Activated naive CD4-positive, alpha-beta T cell treated with anti-CD3 and anti-CD28 coated beads, Interleukin-2, amount 10 ng/mL, durations not matched to agents 7 days and 5 days (primary cell): ENCODE measurements at regions of chr20 and their contacts with region 1.

Region 1: GRCh38 chr20:35303735-35304491 is 11.7 kb upstream of the FAM83C start:
- DNase-seq: peak; percentile 91
- H3K4me3 Mint-ChIP-seq: no peak overlapping the region
- H3K27ac Mint-ChIP-seq: no peak overlapping the region
- H3K4me1 Mint-ChIP-seq: peaks cover 23% of the 10 kb centered on the region
- H3K27me3 Mint-ChIP-seq: peaks cover under 1% of the 10 kb centered on the region

Region 2: GRCh38 chr20:35129647-35130069 is 174.3 kb before region 1 on chr20:
- CTCF ChIA-PET with region 1: no interaction called
- DNase-seq: no peak
- H3K4me3 Mint-ChIP-seq: no peak overlapping the region
- H3K27ac Mint-ChIP-seq: no peak overlapping the region
- H3K4me1 Mint-ChIP-seq: no peaks in the 10 kb centered on the region
- H3K27me3 Mint-ChIP-seq: no peaks in the 10 kb centered on the region

Region 3: GRCh38 chr20:35232575-35232974 is 71.3 kb before region 1 on chr20:
- CTCF ChIA-PET with region 1: no interaction called
- DNase-seq: no peak
- H3K4me3 Mint-ChIP-seq: no peak overlapping the region
- H3K27ac Mint-ChIP-seq: no peak overlapping the region
- H3K4me1 Mint-ChIP-seq: no peaks in the 10 kb centered on the region
- H3K27me3 Mint-ChIP-seq: peaks cover 16% of the 10 kb centered on the region

Region 4: GRCh38 chr20:35318502-35319157 is 14.7 kb after region 1 on chr20:
- CTCF ChIA-PET with region 1: interaction called, 16 read pairs
- DNase-seq: no peak
- H3K4me3 Mint-ChIP-seq: no peak overlapping the region
- H3K27ac Mint-ChIP-seq: peak overlapping the region; percentile 42
- H3K4me1 Mint-ChIP-seq: peaks cover 34% of the 10 kb centered on the region
- H3K27me3 Mint-ChIP-seq: no peaks in the 10 kb centered on the region

Region 5: GRCh38 chr20:35329435-35330139 is 25.7 kb after region 1 on chr20:
- CTCF ChIA-PET with region 1: interaction called, 104 read pairs
- DNase-seq: peak; percentile 62
- H3K4me3 Mint-ChIP-seq: no peak overlapping the region
- H3K27ac Mint-ChIP-seq: no peak overlapping the region
- H3K4me1 Mint-ChIP-seq: no peaks in the 10 kb centered on the region
- H3K27me3 Mint-ChIP-seq: no peaks in the 10 kb centered on the region

Region 6: GRCh38 chr20:35421322-35421721 is 117.4 kb after region 1 on chr20:
- CTCF ChIA-PET with region 1: no interaction called
- DNase-seq: no peak
- H3K4me3 Mint-ChIP-seq: no peak overlapping the region
- H3K27ac Mint-ChIP-seq: no peak overlapping the region
- H3K4me1 Mint-ChIP-seq: no peaks in the 10 kb centered on the region
- H3K27me3 Mint-ChIP-seq: peaks cover 28% of the 10 kb centered on the region

Region 7: DNA sequence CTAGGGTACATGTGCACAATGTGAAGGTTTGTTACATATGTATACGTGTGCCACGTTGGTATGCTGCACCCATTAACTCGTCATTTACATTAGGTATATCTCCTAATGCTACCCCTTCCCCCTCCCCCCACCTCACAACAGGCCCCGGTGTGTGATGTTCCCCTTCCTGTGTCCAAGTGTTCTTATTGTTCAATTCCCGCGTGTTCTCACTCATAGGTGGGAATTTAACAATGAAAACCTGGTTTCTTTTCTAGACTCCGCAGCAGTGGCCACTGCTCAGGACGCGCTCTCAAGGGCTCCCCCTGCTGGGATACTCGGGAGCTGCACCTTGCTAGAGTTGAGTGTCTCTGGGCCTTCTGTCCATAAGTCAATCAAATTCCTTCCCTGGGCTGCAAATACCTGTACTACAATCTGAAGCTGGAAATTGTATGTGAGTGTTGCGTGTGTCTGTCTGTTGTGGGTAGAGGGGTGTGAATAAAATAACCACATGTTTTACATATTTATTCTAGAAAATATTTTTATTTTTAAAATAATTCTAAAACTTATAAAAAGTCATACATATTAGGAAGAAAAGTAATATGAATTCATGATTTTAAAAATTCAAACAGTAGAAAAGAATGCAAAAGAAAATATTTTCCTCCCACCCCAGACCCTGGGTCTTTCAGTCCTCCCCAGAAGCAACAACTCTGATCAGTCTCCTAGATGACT is 143.3 kb after region 1 on chr20:
- CTCF ChIA-PET with region 1: interaction called, 101 read pairs
- DNase-seq: peak; percentile 95
- H3K4me3 Mint-ChIP-seq: peak overlapping the region; percentile 76
- H3K27ac Mint-ChIP-seq: no peak overlapping the region
- H3K4me1 Mint-ChIP-seq: peaks cover 7% of the 10 kb centered on the region
- H3K27me3 Mint-ChIP-seq: peaks cover 8% of the 10 kb centered on the region

Region 8: GRCh38 chr20:35454881-35455609 is 151.1 kb after region 1 on chr20 and contains the start of gene CEP250:
- CTCF ChIA-PET with region 1: interaction called, 75 read pairs
- DNase-seq: peak; percentile 95
- H3K4me3 Mint-ChIP-seq: peak within 1 kb of the TSS; percentile 91
- H3K27ac Mint-ChIP-seq: peak within 1 kb of the TSS; percentile 96
- H3K4me1 Mint-ChIP-seq: peaks cover 28% of the 10 kb centered on the region
- H3K27me3 Mint-ChIP-seq: no peaks in the 10 kb centered on the region

Region 9: DNA sequence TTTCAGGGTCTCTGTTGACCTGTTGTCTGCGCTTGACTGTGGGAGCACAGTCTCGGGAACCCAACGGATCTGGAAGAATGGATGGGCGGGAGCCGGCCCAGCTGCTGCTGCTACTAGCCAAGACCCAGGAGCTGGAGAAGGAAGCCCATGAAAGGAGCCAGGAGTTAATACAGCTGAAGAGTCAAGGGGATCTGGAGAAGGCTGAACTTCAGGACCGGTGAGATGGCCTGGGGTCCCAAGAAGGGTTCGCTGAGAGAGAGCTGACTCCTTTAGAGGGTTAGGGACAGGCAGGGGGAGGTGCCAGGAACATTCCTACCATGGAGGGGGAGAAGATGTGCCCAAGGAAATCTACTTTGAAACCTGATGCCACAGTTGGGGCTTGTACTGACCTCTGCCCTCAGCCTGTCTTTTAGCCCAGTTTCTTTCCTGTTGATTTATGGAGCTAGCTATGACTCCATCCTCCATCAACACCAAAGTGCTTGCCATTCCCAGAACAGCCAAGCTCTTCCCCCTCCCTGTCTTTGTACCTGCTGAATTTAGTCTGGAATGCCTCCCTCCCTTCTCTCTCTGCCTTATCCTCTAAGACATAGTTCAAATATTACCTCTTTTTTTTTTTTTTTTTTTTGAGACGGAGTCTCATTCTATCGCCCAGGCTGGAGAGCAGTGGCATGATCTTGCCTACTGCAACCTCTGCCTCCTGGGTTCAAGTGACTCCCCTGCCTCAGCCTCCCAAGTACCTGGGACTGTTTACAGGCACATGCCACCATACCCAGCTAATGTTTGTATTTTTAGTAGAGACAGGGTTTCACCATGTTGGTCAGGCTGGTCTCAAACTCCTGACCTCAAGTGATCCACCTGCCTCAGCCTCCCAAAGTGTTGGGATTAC is 163.7 kb after region 1 on chr20:
- CTCF ChIA-PET with region 1: no interaction called
- DNase-seq: no peak
- H3K4me3 Mint-ChIP-seq: no peak overlapping the region
- H3K27ac Mint-ChIP-seq: no peak overlapping the region
- H3K4me1 Mint-ChIP-seq: no peaks in the 10 kb centered on the region
- H3K27me3 Mint-ChIP-seq: no peaks in the 10 kb centered on the region